ENCODE measurements at regions of chr10 and their contacts with region 1.

Region 1: DNA sequence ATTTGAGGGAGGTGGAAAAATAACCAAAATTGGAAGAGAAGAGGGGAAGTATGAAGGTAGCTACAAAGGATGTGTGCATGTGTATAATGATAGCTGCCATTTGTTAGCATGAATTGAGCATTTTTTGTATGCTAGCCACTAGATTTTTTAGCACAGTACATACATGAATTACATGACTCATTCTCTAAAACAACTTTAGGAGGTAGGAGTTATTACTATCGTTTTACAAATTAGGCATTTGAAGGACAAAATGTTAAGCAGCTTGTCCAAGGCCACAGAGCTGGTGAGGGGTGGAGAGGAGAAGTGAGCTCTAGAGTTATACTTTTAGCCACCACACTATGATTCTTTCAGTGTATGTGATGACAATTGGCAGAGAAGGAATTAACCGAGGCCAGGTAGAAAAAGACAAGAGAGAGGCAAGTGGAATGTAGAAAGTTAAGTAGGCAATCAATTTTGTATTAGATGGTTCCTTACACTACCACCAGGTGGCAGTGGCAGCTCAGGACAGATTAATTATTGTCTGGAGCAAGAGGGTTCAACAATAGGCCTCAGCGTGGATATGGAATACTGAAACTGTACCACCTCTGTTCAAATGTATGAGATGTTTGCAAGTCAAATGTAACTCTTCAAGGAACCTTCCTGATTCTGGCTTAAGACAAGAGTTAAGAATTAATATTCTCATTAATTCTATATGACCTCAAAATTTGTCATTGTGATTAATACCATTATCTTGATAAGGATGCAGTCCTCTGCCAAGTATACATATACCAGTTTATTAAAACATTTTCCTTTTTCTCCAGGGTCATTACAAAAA is 128.0 kb downstream of the MBL2 start:
- DNase-seq: peak; percentile 67
- H3K4me3 Mint-ChIP-seq: no peak overlapping the region
- H3K27ac Mint-ChIP-seq: no peak overlapping the region
- H3K4me1 Mint-ChIP-seq: peaks cover 21% of the 10 kb centered on the region
- H3K27me3 Mint-ChIP-seq: no peaks in the 10 kb centered on the region
- CTCF ChIP-seq: peak; percentile 82

Region 2: GRCh38 chr10:52597189-52597863 is 47.3 kb before region 1 on chr10:
- CTCF ChIA-PET with region 1: no interaction called
- intact Hi-C with region 1: loop called (anchors 5 kb)
- DNase-seq: no peak
- H3K4me3 Mint-ChIP-seq: no peak overlapping the region
- H3K27ac Mint-ChIP-seq: no peak overlapping the region
- H3K4me1 Mint-ChIP-seq: peaks cover 18% of the 10 kb centered on the region
- H3K27me3 Mint-ChIP-seq: no peaks in the 10 kb centered on the region
- CTCF ChIP-seq: no peak

Region 3: GRCh38 chr10:52729271-52730104 is 84.9 kb after region 1 on chr10:
- CTCF ChIA-PET with region 1: interaction called, 17 read pairs
- intact Hi-C with region 1: loop called (anchors 1 kb)
- DNase-seq: no peak
- H3K4me3 Mint-ChIP-seq: no peak overlapping the region
- H3K27ac Mint-ChIP-seq: no peak overlapping the region
- H3K4me1 Mint-ChIP-seq: peaks cover 16% of the 10 kb centered on the region
- H3K27me3 Mint-ChIP-seq: no peaks in the 10 kb centered on the region
- CTCF ChIP-seq: peak; percentile 28

Region 4: GRCh38 chr10:52779541-52780390 is 135.2 kb after region 1 on chr10:
- CTCF ChIA-PET with region 1: interaction called, 10 read pairs
- intact Hi-C with region 1: loop called (anchors 1 kb)
- DNase-seq: peak; percentile 87
- H3K4me3 Mint-ChIP-seq: no peak overlapping the region
- H3K27ac Mint-ChIP-seq: no peak overlapping the region
- H3K4me1 Mint-ChIP-seq: no peaks in the 10 kb centered on the region
- H3K27me3 Mint-ChIP-seq: peaks cover 15% of the 10 kb centered on the region
- CTCF ChIP-seq: peak; percentile 86

Region 5: DNA sequence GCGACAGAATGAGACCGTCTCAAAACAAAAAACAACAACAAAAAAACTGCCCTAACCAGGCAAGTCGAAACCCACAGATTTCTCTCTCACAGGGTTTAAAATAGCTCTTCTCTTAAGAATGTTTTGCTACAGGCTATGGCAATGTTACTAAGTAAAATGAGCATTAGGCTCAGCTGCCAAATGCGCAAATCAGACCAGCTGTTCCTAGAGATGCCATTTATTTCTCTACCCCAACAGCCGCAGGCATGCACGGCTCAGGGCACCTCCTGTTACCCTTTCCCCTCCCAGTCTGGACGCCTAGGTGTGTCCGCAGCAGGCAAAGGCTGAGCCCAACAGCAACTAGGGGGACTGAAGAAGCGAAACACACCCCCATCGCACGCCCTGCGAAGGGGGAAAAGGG is 296.3 kb after region 1 on chr10:
- CTCF ChIA-PET with region 1: no interaction called
- intact Hi-C with region 1: no loop called
- DNase-seq: no peak
- H3K4me3 Mint-ChIP-seq: no peak overlapping the region
- H3K27ac Mint-ChIP-seq: no peak overlapping the region
- H3K4me1 Mint-ChIP-seq: no peaks in the 10 kb centered on the region
- H3K27me3 Mint-ChIP-seq: no peaks in the 10 kb centered on the region
- CTCF ChIP-seq: no peak

Measured in Calu3 (cell line).